ENCODE measurements at regions of chr11 and their contacts with region 1.

Region 1: DNA sequence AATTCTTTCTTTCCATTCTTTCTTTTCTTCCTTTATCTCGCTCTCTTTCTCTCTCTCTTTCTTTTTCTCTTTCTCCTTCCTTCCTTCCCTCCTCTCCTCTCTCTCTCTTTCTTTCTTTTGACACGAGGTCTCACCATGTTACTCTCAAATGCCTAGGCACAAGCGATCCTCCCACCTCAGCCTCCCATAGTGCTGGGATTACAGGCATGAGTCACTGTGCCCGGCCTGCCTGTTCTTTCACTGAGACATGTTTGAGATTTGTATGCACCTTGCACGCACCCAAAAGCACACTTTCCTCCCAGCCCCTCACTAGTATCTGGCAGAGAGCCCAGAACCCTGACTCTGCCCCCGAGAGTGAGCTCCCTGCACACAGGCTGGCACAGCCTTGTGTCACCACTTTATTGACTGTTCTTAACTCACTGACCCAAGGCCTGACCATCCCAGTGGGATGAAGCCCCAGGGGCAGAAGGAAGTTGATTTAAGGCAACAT is 56.8 kb downstream of the CD6 start:
- DNase-seq: peak in 3 of 9 donors; percentile 46 to 80 (median 60)
- ATAC-seq: peak; percentile 6
- H3K4me3 ChIP-seq: peak overlapping the region; percentile 30
- H3K4me3 Mint-ChIP-seq: peak overlapping the region; percentile 78 to 91 (median 86)
- H3K27ac ChIP-seq: peak overlapping the region; percentile 76
- H3K27ac Mint-ChIP-seq: peak overlapping the region; percentile 91 to 99 (median 97)
- H3K4me1 ChIP-seq: peaks cover 43 to 56% of the 10 kb centered on the region in 2 donors
- H3K4me1 Mint-ChIP-seq: peaks cover 62 to 97% (median 90%) of the 10 kb centered on the region in 7 donors
- H3K27me3 ChIP-seq: no peaks in the 10 kb centered on the region
- H3K27me3 Mint-ChIP-seq: no peaks in the 10 kb centered on the region

Region 2: GRCh38 chr11:61004180-61004611 is 24.1 kb before region 1 on chr11:
- CTCF ChIA-PET with region 1: no interaction called
- POLR2A ChIA-PET with region 1: interaction called, 26 read pairs
- intact Hi-C with region 1: loop called in 1 of 2 experiments (anchors 1 kb)
- DNase-seq: peak in 5 of 9 donors; percentile 53 to 64 (median 54)
- ATAC-seq: peak; percentile 59
- H3K4me3 ChIP-seq: peak overlapping the region; percentile 14
- H3K4me3 Mint-ChIP-seq: peak overlapping the region; percentile 79 to 87 (median 82)
- H3K27ac ChIP-seq: peak overlapping the region; percentile 65
- H3K27ac Mint-ChIP-seq: peak overlapping the region; percentile 84 to 97 (median 95)
- H3K4me1 ChIP-seq: peaks cover 16 to 70% of the 10 kb centered on the region in 2 donors
- H3K4me1 Mint-ChIP-seq: peaks cover 59 to 90% (median 77%) of the 10 kb centered on the region in 7 donors
- H3K27me3 ChIP-seq: no peaks in the 10 kb centered on the region
- H3K27me3 Mint-ChIP-seq: no peaks in the 10 kb centered on the region

Region 3: GRCh38 chr11:61049859-61050258 is 21.5 kb after region 1 on chr11:
- CTCF ChIA-PET with region 1: interaction called, 4 read pairs
- POLR2A ChIA-PET with region 1: interaction called, 210 read pairs
- intact Hi-C with region 1: no loop called
- DNase-seq: no peak
- ATAC-seq: no peak
- H3K4me3 ChIP-seq: no peak overlapping the region
- H3K4me3 Mint-ChIP-seq: peak overlapping the region in 4 of 10 donors; percentile 18 to 51 (median 34)
- H3K27ac ChIP-seq: no peak overlapping the region
- H3K27ac Mint-ChIP-seq: peak overlapping the region in 8 of 9 donors; percentile 10 to 90 (median 76)
- H3K4me1 ChIP-seq: peaks cover 0 to 37% of the 10 kb centered on the region in 2 donors
- H3K4me1 Mint-ChIP-seq: peaks cover 28 to 75% (median 69%) of the 10 kb centered on the region in 7 donors
- H3K27me3 ChIP-seq: no peaks in the 10 kb centered on the region
- H3K27me3 Mint-ChIP-seq: no peaks in the 10 kb centered on the region

Region 4: DNA sequence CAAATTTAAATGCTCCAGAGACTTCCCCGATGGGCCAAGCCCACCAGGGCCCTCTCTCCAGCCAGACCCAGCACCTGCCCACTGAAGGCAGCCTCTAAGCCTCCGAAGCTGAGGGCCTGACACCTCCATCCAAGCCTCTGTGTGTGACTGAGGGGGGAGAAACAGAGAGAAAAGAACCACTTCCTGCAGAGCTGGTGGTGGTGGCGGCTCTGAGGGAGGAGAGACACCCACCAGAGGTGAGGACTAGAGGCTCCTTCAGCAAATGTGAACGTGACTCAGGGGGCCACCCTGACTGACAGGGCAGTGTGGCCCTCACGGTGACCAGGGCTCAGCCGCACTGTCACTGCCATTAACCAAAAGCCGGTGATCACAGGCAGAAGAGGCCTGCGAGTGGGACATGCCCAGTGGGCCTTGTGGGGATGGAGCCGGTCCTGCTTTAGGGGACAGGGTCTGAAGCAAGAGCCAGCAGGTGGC is 42.9 kb after region 1 on chr11:
- CTCF ChIA-PET with region 1: interaction called, 3 read pairs
- POLR2A ChIA-PET with region 1: interaction called, 14 read pairs
- intact Hi-C with region 1: loop called (anchors 1 to 2 kb)
- DNase-seq: peak in 8 of 9 donors; percentile 56 to 78 (median 71)
- ATAC-seq: peak; percentile 96
- H3K4me3 ChIP-seq: peak overlapping the region; percentile 21
- H3K4me3 Mint-ChIP-seq: peak overlapping the region; percentile 65 to 87 (median 76)
- H3K27ac ChIP-seq: peak overlapping the region; percentile 76
- H3K27ac Mint-ChIP-seq: peak overlapping the region; percentile 92 to 97 (median 97)
- H3K4me1 ChIP-seq: peaks cover 41 to 81% of the 10 kb centered on the region in 2 donors
- H3K4me1 Mint-ChIP-seq: peaks cover 69 to 99% (median 91%) of the 10 kb centered on the region in 7 donors
- H3K27me3 ChIP-seq: no peaks in the 10 kb centered on the region
- H3K27me3 Mint-ChIP-seq: peaks cover 0 to 4% (median 0%) of the 10 kb centered on the region in 5 donors

Region 5: GRCh38 chr11:61111786-61112517 is 83.6 kb after region 1 on chr11:
- CTCF ChIA-PET with region 1: interaction called, 5 read pairs
- POLR2A ChIA-PET with region 1: interaction called, 30 read pairs
- intact Hi-C with region 1: loop called (anchors 1 kb)
- DNase-seq: peak in 8 of 9 donors; percentile 57 to 78 (median 74)
- ATAC-seq: peak; percentile 81
- H3K4me3 ChIP-seq: peak overlapping the region; percentile 31
- H3K4me3 Mint-ChIP-seq: peak overlapping the region in 9 of 10 donors; percentile 82 to 93 (median 86)
- H3K27ac ChIP-seq: peak overlapping the region; percentile 78
- H3K27ac Mint-ChIP-seq: peak overlapping the region in 7 of 9 donors; percentile 81 to 98 (median 92)
- H3K4me1 ChIP-seq: peaks cover 58 to 93% of the 10 kb centered on the region in 2 donors
- H3K4me1 Mint-ChIP-seq: peaks cover 81 to 100% (median 97%) of the 10 kb centered on the region in 7 donors
- H3K27me3 ChIP-seq: no peaks in the 10 kb centered on the region
- H3K27me3 Mint-ChIP-seq: no peaks in the 10 kb centered on the region

Region 6: DNA sequence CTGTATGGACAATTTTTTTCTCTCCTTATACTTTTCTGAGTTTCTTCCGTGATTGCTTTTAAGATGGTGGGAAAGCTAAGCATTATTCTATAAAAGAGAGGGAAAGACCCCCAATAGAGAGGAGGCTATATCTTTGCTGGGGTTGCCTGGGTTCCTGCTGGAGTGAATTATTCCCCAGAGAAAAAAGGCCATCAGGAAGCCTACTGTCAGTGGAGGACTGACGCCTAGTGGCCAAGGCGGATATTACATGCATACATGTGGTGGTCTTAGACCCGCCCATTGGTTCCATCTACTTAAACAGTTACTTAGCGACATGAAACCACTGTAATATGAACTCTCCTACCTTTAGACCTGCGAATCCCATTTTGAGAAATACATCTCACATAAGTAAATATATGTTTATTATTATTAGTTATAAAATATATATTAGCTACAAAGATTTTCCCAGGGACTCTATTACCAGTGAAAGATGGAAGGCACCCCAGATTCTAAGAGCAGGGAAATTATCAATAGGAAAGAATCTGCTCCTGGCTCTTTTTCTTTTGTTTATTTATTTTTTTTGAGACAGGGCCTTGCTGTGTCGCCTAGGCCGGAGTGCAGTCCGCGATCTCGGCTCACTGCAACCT is 159.3 kb after region 1 on chr11:
- CTCF ChIA-PET with region 1: no interaction called
- POLR2A ChIA-PET with region 1: no interaction called
- intact Hi-C with region 1: loop called (anchors 5 kb)
- DNase-seq: peak; percentile 48 to 76 (median 72)
- ATAC-seq: peak; percentile 96
- H3K4me3 ChIP-seq: no peak overlapping the region
- H3K4me3 Mint-ChIP-seq: no peak overlapping the region
- H3K27ac ChIP-seq: no peak overlapping the region
- H3K27ac Mint-ChIP-seq: peak overlapping the region in 1 of 9 donors; percentile 25
- H3K4me1 ChIP-seq: no peaks in the 10 kb centered on the region
- H3K4me1 Mint-ChIP-seq: peaks cover 0 to 5% (median 0%) of the 10 kb centered on the region in 7 donors
- H3K27me3 ChIP-seq: no peaks in the 10 kb centered on the region
- H3K27me3 Mint-ChIP-seq: peaks cover 0 to 13% (median 4%) of the 10 kb centered on the region in 5 donors

Region 7: DNA sequence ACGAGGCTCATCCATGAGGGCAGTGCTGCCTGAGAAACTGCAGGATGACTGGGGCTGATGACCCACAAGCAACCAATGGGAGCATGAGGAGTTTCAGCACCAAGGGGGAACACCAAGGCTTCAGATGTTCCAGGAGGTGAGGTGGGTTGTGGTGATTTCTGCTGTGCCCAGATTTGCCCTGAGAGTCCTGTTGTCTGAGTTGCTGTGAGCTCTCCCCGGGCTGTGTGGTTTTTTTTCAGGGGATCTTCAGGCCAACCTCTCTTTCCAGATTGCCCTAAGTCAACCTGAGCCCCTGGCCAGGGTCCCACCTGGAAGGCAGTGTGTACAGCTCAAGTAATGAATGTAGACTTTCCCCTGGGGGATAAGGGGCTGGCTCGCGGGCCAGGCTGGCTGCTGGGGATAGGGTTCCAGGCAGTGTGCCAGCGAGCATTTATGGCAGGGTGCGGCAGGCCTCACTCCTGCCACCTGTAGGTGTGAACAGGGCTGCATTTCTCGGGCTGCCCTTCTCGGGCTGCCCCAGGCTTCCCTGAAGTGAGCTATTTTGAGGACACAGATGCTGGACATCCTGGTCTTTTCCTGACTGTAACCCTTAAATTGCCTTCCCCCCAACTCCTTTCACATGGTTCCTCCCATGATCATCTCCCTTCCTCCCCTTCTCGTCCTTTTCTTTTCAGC is 1946.7 kb after region 1 on chr11:
- CTCF ChIA-PET with region 1: no interaction called
- POLR2A ChIA-PET with region 1: no interaction called
- intact Hi-C with region 1: no loop called
- DNase-seq: peak in 2 of 9 donors; percentile 2
- ATAC-seq: no peak
- H3K4me3 ChIP-seq: no peak overlapping the region
- H3K4me3 Mint-ChIP-seq: no peak overlapping the region
- H3K27ac ChIP-seq: no peak overlapping the region
- H3K27ac Mint-ChIP-seq: no peak overlapping the region
- H3K4me1 ChIP-seq: no peaks in the 10 kb centered on the region
- H3K4me1 Mint-ChIP-seq: no peaks in the 10 kb centered on the region
- H3K27me3 ChIP-seq: no peaks in the 10 kb centered on the region
- H3K27me3 Mint-ChIP-seq: peaks cover 9 to 25% (median 21%) of the 10 kb centered on the region in 5 donors

Measured in naive thymus-derived CD4-positive, alpha-beta T cell (primary cell).